Activated CD8-positive, alpha-beta T cell treated with anti-CD3 and anti-CD28 coated beads, Interleukin-2, amount 10 ng/mL, durations not matched to agents 7 days and 5 days (primary cell): ENCODE measurements at regions of chr5 and their contacts with region 1.

Region 1: GRCh38 chr5:1492757-1493156 is 31.0 kb downstream of the LPCAT1 start:
- DNase-seq: peak; percentile 29
- ATAC-seq: no peak
- H3K4me3 Mint-ChIP-seq: no peak overlapping the region
- H3K27ac Mint-ChIP-seq: no peak overlapping the region
- H3K4me1 Mint-ChIP-seq: peaks cover 48% of the 10 kb centered on the region
- H3K27me3 Mint-ChIP-seq: no peaks in the 10 kb centered on the region

Region 2: DNA sequence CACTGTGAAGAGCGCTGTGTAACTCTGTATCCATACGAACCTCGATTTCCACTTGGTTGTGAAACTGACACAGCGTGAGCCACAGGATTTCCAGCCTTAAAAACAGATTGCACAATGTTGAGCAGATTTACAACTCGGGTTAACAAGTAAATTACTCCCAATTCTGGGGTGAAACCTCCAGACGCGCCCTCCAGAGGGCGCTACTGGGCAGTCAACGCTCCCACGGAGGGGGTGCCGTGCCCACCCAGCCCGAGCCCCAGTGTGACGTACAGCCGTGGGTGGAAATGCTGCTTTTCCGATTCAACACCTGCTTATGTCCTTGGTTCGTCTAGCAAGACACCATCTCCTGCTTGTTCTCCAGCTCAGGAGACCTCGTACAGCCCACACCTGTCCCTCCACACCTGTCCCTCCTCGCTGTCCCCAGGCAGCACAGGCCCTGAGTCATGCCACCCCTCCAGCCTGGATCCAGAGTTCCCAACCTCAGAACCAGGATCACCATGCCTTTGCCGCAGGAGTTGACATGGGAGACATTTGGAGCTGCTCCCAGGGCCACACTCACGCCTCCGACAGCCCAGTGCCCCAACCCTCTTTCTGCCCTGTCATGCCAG is 13.1 kb before region 1 on chr5:
- CTCF ChIA-PET with region 1: interaction called, 11 read pairs
- POLR2A ChIA-PET with region 1: no interaction called
- DNase-seq: peak; percentile 43
- ATAC-seq: no peak
- H3K4me3 Mint-ChIP-seq: no peak overlapping the region
- H3K27ac Mint-ChIP-seq: no peak overlapping the region
- H3K4me1 Mint-ChIP-seq: no peaks in the 10 kb centered on the region
- H3K27me3 Mint-ChIP-seq: no peaks in the 10 kb centered on the region